ENCODE measurements at regions of chr11 and their contacts with region 1.

Region 1: DNA sequence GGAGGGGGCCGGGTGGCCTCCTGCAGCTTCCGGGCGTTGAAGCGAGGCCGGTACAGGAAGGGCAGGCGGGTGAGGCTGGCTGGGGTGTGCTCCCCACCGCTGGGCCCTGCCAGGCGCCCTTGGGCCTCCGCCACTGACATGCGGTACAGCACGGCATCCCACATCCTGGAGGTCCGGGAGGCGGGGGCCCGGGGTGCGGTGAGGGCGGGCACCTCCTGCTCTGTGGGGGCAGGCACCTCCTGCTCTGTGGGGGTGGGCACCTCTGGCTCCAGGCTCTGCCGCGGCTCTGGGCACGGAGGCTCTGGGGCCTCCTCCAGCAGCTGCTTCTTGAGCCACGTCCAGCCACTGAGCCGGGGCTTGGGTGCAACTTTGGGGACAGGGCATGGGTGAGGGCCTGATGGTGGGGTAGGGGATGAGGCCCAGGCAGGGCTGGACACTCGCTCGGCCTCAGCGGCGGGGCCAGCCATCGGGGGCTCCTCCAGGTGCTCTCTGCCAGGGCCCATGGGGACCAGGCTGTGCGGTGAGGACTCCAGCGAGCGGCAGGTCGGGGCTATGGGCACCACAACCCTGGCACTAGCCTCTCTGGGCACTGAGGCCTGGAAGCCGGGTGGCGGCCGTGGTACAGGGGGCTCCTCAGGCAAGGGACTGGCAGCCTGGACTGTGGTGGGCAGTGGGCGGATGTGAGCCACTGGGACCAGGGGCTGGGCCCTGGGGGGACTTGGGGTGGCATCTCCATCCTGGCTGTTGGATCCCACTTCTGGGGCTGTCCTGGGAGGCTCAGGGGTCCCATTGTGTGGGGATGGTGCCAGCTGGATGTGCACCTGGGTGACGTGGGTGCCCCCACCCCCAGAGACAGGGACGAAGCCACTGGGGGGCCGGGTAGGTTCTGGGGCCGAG is 2.2 kb downstream of the PRR33 start:
- DNase-seq: no peak
- H3K4me3 ChIP-seq: peak overlapping the region in 1 of 3 experiments; percentile 20
- H3K4me3 Mint-ChIP-seq: peak overlapping the region in 1 of 2 donors; percentile 82
- H3K27ac ChIP-seq: no peak overlapping the region
- H3K27ac Mint-ChIP-seq: no peak overlapping the region
- H3K4me1 ChIP-seq: peaks cover 36 to 44% of the 10 kb centered on the region in 2 donors
- H3K4me1 Mint-ChIP-seq: peaks cover 19% of the 10 kb centered on the region
- H3K27me3 ChIP-seq: peaks cover 0 to 26% of the 10 kb centered on the region in 2 donors
- H3K27me3 Mint-ChIP-seq: peaks cover 18 to 52% (median 24%) of the 10 kb centered on the region in 3 donors
- CTCF ChIP-seq: no peak

Region 2: DNA sequence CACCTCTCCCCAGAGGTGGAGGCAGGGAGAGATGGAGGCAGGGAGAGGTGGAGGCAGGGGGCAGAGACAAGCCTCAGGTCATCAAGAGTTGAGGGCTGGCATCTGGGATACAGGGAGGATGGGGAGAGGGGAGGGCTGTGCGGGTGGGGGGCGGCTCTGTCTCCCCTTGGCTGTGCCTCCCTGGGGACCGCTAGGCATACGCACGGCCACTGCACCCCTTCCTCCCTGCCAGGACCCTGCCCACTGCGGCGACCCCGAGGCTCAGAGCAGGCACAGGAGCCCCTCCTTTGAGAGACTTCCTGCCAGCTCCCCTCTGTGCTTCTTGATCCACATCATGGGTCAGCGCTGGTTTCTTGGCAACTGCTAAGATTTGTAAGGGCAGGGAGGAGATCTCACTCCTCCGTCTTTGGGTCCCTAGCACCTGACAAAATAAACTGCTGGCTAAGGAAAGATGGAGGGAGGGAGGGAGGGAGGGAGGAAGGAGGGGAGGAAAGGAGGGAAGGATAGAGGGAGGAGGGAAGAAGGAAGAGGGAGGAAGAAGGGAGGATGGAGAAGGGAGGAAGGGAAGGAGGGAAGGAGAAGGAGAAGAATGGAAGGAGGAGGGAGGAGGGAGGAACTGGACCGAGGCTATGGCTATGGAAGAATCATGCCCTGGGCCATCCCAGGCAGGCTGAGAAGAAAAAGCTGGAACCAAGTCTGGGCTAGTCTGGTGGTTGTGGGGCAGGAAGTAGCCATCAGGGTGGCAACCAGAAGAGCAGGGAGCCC is 16.2 kb before region 1 on chr11:
- intact Hi-C with region 1: loop called in 1 of 2 experiments (anchors 2 kb)
- DNase-seq: no peak
- H3K4me3 ChIP-seq: no peak overlapping the region
- H3K4me3 Mint-ChIP-seq: no peak overlapping the region
- H3K27ac ChIP-seq: no peak overlapping the region
- H3K27ac Mint-ChIP-seq: no peak overlapping the region
- H3K4me1 ChIP-seq: peaks cover 10 to 54% of the 10 kb centered on the region in 2 donors
- H3K4me1 Mint-ChIP-seq: peaks cover 60% of the 10 kb centered on the region
- H3K27me3 ChIP-seq: no peaks in the 10 kb centered on the region
- H3K27me3 Mint-ChIP-seq: peaks cover 2 to 12% (median 4%) of the 10 kb centered on the region in 3 donors
- CTCF ChIP-seq: no peak